PC-3 (cell line): ENCODE measurements at regions of chr4 and their contacts with region 1.

Region 1: DNA sequence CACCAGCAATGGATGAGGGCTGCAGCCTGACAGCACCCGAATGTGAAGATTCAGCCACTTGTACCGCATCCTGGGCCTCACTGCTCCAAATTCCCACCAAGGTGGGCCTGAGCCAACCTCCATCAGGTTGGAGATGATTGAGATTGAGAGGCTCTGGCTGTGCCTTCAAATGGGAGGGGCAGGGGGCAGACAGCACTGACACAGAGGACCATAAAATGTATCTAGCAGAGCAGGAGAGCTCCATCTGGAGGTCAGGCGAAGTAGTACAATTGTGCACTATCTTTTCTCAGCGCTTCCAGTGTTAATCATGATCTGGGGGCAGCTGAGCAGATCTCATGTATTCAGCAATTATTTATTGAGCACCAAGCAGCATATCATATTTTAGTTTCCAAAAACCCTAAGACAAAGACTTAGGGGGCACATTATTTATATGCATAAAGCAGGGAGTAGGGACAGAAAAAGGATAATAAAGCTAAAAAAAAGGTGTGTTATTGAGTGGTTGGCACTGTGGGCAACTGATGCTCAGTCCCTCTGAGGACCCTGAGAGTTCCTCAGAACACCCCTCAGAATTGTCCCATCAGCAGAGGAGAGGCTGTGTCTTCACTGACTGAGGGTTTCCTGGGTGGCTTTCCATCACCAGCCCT is 31.6 kb upstream of the C1QTNF7 start:
- DNase-seq: peak; percentile 67
- ATAC-seq: peak; percentile 70
- H3K4me3 ChIP-seq: no peak overlapping the region
- H3K27ac ChIP-seq: no peak overlapping the region
- H3K4me1 ChIP-seq: no peaks in the 10 kb centered on the region; the same call in 1 of the 2 replicates
- H3K27me3 ChIP-seq: no peaks in the 10 kb centered on the region
- CTCF ChIP-seq: peak; percentile 76

Region 2: GRCh38 chr4:15231265-15232091 is 164.8 kb before region 1 on chr4:
- CTCF ChIA-PET with region 1: no interaction called
- POLR2A ChIA-PET with region 1: no interaction called
- intact Hi-C with region 1: loop called (anchors 2 kb)
- DNase-seq: peak; percentile 79
- ATAC-seq: peak; percentile 62
- H3K4me3 ChIP-seq: no peak overlapping the region
- H3K27ac ChIP-seq: no peak overlapping the region
- H3K4me1 ChIP-seq: peaks cover 19% of the 10 kb centered on the region
- H3K27me3 ChIP-seq: no peaks in the 10 kb centered on the region
- CTCF ChIP-seq: peak; percentile 80

Region 3: DNA sequence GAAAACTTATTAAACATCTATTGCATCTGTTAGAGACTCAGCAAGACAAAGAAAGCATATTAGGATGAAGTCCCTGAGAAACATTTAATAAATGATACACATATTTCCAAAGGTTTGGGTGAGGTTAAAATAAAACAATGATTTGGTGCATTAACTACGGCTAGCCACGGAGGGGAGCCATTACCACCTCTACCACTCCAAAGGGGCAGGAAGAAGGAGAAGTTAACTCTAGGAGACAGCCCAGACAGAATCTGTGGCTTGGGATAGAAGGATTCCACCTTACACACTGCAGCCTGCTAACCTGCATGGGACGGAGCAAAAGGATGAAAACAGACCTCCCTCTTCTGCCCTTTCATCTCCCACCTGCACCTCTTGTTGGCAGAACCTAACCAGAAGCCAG is 157.6 kb before region 1 on chr4:
- CTCF ChIA-PET with region 1: no interaction called
- POLR2A ChIA-PET with region 1: no interaction called
- intact Hi-C with region 1: loop called (anchors 1 kb)
- DNase-seq: peak; percentile 56
- ATAC-seq: peak; percentile 35; the same call in 1 of the 2 replicates
- H3K4me3 ChIP-seq: no peak overlapping the region
- H3K27ac ChIP-seq: no peak overlapping the region
- H3K4me1 ChIP-seq: peaks cover 13% of the 10 kb centered on the region
- H3K27me3 ChIP-seq: no peaks in the 10 kb centered on the region
- CTCF ChIP-seq: peak; percentile 72